OCI-LY7 (cell line): ENCODE measurements at regions of chr9 and their contacts with region 1.

Region 1: DNA sequence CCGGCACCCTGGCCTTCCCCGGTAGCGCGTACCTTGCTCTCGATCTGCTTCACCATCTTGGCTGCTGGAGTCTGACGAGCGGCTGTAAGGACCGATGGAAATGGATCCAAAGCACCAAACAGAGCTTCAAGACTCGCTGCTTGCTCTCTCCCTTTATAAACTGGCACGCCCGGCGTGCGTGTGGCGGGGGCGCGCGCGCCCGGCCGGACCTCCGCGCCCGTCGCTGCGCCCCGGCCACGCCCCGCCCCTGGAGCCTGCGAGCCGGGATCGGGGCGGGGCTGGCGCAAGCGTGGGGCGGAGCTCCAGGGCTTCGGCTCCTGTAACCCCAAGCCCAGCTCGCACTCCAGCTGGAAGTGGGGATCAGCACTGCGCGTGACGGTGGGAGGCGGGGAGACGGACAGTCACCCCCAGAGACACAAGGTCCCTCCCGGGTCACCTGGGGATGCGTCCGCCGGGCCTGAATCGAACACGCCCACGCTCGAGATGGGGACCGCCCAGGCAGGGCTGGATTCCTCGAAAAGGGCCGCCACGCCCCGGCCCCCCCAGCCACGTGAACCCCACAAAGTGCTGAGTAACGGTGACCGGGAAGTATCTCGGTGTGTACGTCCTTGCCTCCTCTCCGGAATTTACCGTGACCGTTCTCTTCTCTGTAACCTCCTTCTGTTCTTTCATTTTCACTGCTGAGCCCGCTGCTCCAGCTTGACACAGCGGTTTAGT is at the start of gene TXN:
- DNase-seq: peak; percentile 89
- H3K4me3 ChIP-seq: peak within 1 kb of the TSS; percentile 92
- H3K27ac ChIP-seq: no peak within 1 kb of the TSS
- H3K4me1 ChIP-seq: peaks cover 26% of the 10 kb centered on the region
- CTCF ChIP-seq: no peak
- total RNA-seq, gene TXN: 82.5 and 120 TPM in 2 replicates

Region 2: GRCh38 chr9:110308633-110309038 is 52.1 kb after region 1 on chr9:
- CTCF ChIA-PET with region 1: no interaction called
- POLR2A ChIA-PET with region 1: interaction called, 4 read pairs
- intact Hi-C with region 1: loop called (anchors 5 kb)
- DNase-seq: peak; percentile 17
- H3K4me3 ChIP-seq: peak overlapping the region; percentile 22
- H3K27ac ChIP-seq: peak overlapping the region; percentile 37
- H3K4me1 ChIP-seq: peaks cover 9% of the 10 kb centered on the region
- CTCF ChIP-seq: no peak

Region 3: GRCh38 chr9:110555551-110556331 is 299.2 kb after region 1 on chr9:
- CTCF ChIA-PET with region 1: interaction called, 11 read pairs
- POLR2A ChIA-PET with region 1: no interaction called
- intact Hi-C with region 1: no loop called
- DNase-seq: no peak
- H3K4me3 ChIP-seq: no peak overlapping the region
- H3K27ac ChIP-seq: no peak overlapping the region
- H3K4me1 ChIP-seq: no peaks in the 10 kb centered on the region
- CTCF ChIP-seq: no peak